ENCODE measurements at regions of chr17 and their contacts with region 1.

Region 1: GRCh38 chr17:64479650-64480049 is 17.2 kb downstream of the POLG2 start:
- DNase-seq: no peak
- ATAC-seq: no peak
- H3K4me3 ChIP-seq: no peak overlapping the region
- H3K4me3 Mint-ChIP-seq: no peak overlapping the region
- H3K27ac ChIP-seq: no peak overlapping the region
- H3K27ac Mint-ChIP-seq: no peak overlapping the region
- H3K4me1 ChIP-seq: peaks cover 4% of the 10 kb centered on the region
- H3K4me1 Mint-ChIP-seq: peaks cover 11% of the 10 kb centered on the region
- H3K27me3 ChIP-seq: no peaks in the 10 kb centered on the region
- H3K27me3 Mint-ChIP-seq: no peaks in the 10 kb centered on the region
- CTCF ChIP-seq: no peak

Region 2: GRCh38 chr17:64306850-64307463 is 172.7 kb before region 1 on chr17:
- CTCF ChIA-PET with region 1: no interaction called
- POLR2A ChIA-PET with region 1: no interaction called
- intact Hi-C with region 1: no loop called
- DNase-seq: peak; percentile 53 to 87 (median 64)
- ATAC-seq: peak; percentile 71
- H3K4me3 ChIP-seq: no peak overlapping the region
- H3K4me3 Mint-ChIP-seq: no peak overlapping the region
- H3K27ac ChIP-seq: no peak overlapping the region
- H3K27ac Mint-ChIP-seq: no peak overlapping the region
- H3K4me1 ChIP-seq: no peaks in the 10 kb centered on the region
- H3K4me1 Mint-ChIP-seq: no peaks in the 10 kb centered on the region
- H3K27me3 ChIP-seq: no peaks in the 10 kb centered on the region
- H3K27me3 Mint-ChIP-seq: no peaks in the 10 kb centered on the region
- CTCF ChIP-seq: peak; percentile 87

Region 3: DNA sequence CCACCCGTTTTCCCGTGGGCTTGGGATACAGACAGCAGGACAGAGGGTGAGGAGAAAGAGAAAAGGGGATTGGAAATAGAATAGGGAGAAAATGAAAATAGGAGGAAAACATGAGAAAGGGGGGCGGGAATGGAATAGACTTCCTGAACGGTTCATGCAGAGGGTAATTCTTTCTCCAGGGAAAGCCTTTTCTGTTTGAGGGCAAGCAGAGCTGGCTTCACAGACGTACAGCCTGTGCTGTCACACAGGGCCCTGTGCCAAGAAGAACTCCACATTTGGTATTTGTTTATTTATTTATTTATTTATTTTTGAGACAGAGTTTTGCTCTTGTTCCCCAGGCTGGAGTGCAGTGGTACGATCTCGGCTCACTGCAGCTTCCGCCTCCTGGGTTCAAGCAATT is 18.7 kb before region 1 on chr17:
- CTCF ChIA-PET with region 1: no interaction called
- POLR2A ChIA-PET with region 1: no interaction called
- intact Hi-C with region 1: no loop called
- DNase-seq: no peak
- ATAC-seq: no peak
- H3K4me3 ChIP-seq: no peak overlapping the region
- H3K4me3 Mint-ChIP-seq: no peak overlapping the region
- H3K27ac ChIP-seq: no peak overlapping the region
- H3K27ac Mint-ChIP-seq: no peak overlapping the region
- H3K4me1 ChIP-seq: peaks cover 20% of the 10 kb centered on the region
- H3K4me1 Mint-ChIP-seq: peaks cover 23% of the 10 kb centered on the region
- H3K27me3 ChIP-seq: peaks cover 0 to 2% of the 10 kb centered on the region in 2 experiments
- H3K27me3 Mint-ChIP-seq: no peaks in the 10 kb centered on the region
- CTCF ChIP-seq: no peak

Region 4: DNA sequence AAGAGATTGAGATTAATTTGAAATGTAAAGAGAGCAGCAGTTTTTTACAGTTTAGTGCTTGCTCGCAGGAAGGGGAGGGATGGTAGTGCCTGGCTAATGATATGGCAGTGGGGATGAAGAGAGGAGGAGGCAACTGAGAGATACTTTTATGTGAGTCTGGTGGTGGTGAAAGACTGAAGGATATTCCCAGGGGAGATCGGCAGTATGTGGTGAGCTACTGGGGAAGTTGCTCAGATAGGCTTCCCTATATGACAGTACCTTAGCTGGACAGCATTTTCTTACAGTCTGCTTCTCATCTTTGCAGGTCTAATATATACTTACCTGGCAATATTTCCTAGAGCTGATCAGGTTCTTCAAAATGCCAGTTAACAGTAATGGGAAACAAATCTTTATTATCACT is 35.8 kb after region 1 on chr17:
- CTCF ChIA-PET with region 1: interaction called, 3 read pairs
- POLR2A ChIA-PET with region 1: no interaction called
- intact Hi-C with region 1: loop called in 1 of 2 experiments (anchors 5 kb)
- DNase-seq: no peak
- ATAC-seq: no peak
- H3K4me3 ChIP-seq: no peak overlapping the region
- H3K4me3 Mint-ChIP-seq: no peak overlapping the region
- H3K27ac ChIP-seq: peak overlapping the region in 1 of 2 donors; percentile 14
- H3K27ac Mint-ChIP-seq: no peak overlapping the region
- H3K4me1 ChIP-seq: no peaks in the 10 kb centered on the region
- H3K4me1 Mint-ChIP-seq: peaks cover 39% of the 10 kb centered on the region
- H3K27me3 ChIP-seq: no peaks in the 10 kb centered on the region
- H3K27me3 Mint-ChIP-seq: no peaks in the 10 kb centered on the region
- CTCF ChIP-seq: no peak